Heart left ventricle (tissue), 16 donors: ENCODE measurements at regions of chr1 and their contacts with region 1.

Region 1: GRCh38 chr1:174799136-174799479 is 200.6 kb upstream of the CACYBP start:
- DNase-seq: no peak
- ATAC-seq: no peak
- H3K4me3 ChIP-seq: peak overlapping the region in 10 of 12 donors; percentile 38 to 73 (median 54)
- H3K27ac ChIP-seq: peak overlapping the region in 8 of 12 donors; percentile 2 to 46 (median 30)
- H3K4me1 ChIP-seq: peaks cover 0 to 23% (median 5%) of the 10 kb centered on the region in 12 donors
- H3K27me3 ChIP-seq: no peaks in the 10 kb centered on the region
- CTCF ChIP-seq: no peak
- POLR2A ChIP-seq: no peak

Region 2: GRCh38 chr1:174197547-174197946 is 601.6 kb before region 1 on chr1:
- intact Hi-C with region 1: loop called in 1 of 10 experiments (anchors 5 kb)
- DNase-seq: peak in 3 of 5 donors; percentile 18 to 46 (median 34)
- ATAC-seq: peak in 3 of 4 donors; percentile 39 to 56 (median 49)
- H3K4me3 ChIP-seq: peak overlapping the region in 2 of 12 donors; percentile 4 to 19
- H3K27ac ChIP-seq: peak overlapping the region in 7 of 12 donors; percentile 17 to 64 (median 30)
- H3K4me1 ChIP-seq: peaks cover 0 to 23% (median 5%) of the 10 kb centered on the region in 12 donors
- H3K27me3 ChIP-seq: no peaks in the 10 kb centered on the region
- CTCF ChIP-seq: no peak
- POLR2A ChIP-seq: no peak